ENCODE measurements at regions of chr2 and their contacts with region 1.

Region 1: GRCh38 chr2:99442837-99443236 is 47.0 kb downstream of the REV1 start:
- DNase-seq: no peak
- ATAC-seq: no peak
- H3K4me3 ChIP-seq: no peak overlapping the region
- H3K27ac ChIP-seq: no peak overlapping the region
- H3K4me1 ChIP-seq: no peaks in the 10 kb centered on the region
- H3K27me3 ChIP-seq: no peaks in the 10 kb centered on the region
- CTCF ChIP-seq: peak; percentile 38; the same call in 1 of the 2 replicates

Region 2: DNA sequence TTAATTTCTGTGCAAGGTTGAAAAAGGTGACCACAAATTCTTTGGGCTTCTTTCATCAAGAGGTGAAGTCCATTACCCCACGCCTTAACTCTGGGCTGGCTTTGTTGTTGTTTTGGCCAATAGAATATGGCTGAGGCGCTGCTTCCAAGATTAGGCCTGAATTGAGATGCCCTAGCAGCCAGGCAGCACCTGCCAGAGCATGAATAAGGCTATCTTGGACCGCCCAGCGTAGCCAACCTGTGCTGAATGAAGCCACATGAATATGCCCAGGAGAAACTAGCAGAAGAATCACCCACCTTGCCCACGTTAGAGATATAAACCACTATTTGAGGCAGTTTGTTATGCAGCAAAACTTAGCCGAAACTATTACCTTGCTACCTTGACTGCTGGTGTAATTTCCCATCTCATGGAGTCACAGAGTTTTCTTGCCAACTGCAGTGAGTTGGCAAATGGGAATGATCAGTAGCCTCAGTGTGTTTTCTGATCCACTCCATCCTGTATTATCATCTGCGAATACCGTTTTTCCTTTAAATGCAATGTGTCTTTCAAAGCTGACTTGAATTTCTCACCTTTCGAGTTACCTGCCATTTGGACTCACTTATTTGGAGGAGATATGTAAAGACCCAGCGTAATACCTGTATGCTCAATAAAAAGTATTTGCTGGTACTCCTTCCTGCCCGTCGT is 288.8 kb before region 1 on chr2:
- CTCF ChIA-PET with region 1: no interaction called
- POLR2A ChIA-PET with region 1: interaction called, 14 read pairs
- in situ Hi-C with region 1: no loop called
- intact Hi-C with region 1: no loop called
- DNase-seq: peak; percentile 5
- ATAC-seq: 0 out of 2 replicates have a peak, but pooled peaks have one; percentile 4
- H3K4me3 ChIP-seq: peak overlapping the region; percentile 88 to 93
- H3K27ac ChIP-seq: peak overlapping the region; percentile 98
- H3K4me1 ChIP-seq: peaks cover 14% of the 10 kb centered on the region
- H3K27me3 ChIP-seq: no peaks in the 10 kb centered on the region
- CTCF ChIP-seq: no peak

Region 3: DNA sequence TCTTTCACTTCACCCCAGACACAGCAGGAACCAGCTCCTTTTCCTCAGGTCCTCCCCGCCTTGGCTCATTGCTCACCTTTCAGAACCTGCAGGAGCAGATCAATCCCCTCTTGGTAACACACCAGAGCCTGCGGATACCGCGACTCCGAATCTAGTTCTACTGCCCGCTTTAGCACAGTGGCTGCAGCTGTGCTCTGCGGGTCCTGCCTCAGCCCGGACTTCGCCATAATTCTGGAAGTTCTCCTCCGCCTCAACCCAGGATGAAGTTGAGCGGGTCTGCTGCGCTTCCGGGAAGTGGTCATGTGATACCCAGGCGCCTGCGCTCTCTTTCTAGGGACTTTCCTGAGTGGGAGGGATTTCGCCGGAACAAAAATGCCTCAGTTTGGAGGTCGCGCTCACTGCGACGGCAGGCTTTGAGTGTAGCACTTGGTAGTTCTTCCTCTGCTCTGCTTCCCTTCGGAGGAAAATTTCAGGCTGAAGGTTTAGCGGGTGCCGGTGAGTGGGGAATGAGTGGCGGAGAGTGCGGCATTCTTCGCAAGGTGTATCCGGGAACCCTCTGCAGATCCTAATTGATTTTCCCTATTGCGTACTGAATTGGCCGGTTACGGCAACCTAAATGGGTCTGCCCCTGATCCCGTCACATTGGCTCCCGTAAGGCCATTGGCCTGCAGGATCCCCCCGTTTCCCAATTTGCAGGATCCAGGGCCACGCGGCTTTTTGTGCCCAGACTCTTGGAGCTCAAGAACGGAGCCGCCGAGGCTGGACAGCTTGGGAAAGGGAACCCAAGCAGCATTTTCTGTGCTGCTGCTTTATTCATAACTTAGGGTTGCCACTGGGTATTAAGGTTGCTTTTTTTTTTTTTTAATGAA is 261.8 kb before region 1 on chr2 and contains the starts of genes MITD1 and MRPL30:
- CTCF ChIA-PET with region 1: no interaction called
- POLR2A ChIA-PET with region 1: interaction called, 10 read pairs
- in situ Hi-C with region 1: no loop called
- intact Hi-C with region 1: no loop called
- DNase-seq: peak; percentile 94
- ATAC-seq: peak; percentile 98
- H3K4me3 ChIP-seq: peak within 1 kb of the TSS; percentile 68 to 99
- H3K27ac ChIP-seq: peak within 1 kb of the TSS; percentile 88
- H3K4me1 ChIP-seq: peaks cover 12% of the 10 kb centered on the region
- H3K27me3 ChIP-seq: no peaks in the 10 kb centered on the region
- CTCF ChIP-seq: no peak
- total RNA-seq, gene MITD1: 36.0 TPM
- total RNA-seq, gene MRPL30: 25.6 TPM

Region 4: GRCh38 chr2:99425022-99425421 is 17.8 kb before region 1 on chr2:
- CTCF ChIA-PET with region 1: no interaction called
- POLR2A ChIA-PET with region 1: no interaction called
- in situ Hi-C with region 1: no loop called
- intact Hi-C with region 1: no loop called
- DNase-seq: no peak
- ATAC-seq: no peak
- H3K4me3 ChIP-seq: no peak overlapping the region
- H3K27ac ChIP-seq: no peak overlapping the region
- H3K4me1 ChIP-seq: no peaks in the 10 kb centered on the region
- H3K27me3 ChIP-seq: no peaks in the 10 kb centered on the region
- CTCF ChIP-seq: no peak